ENCODE measurements at regions of chr5 and their contacts with region 1.

Region 1: GRCh38 chr5:115190388-115190787 is 20.7 kb upstream of the TRIM36 start:
- DNase-seq: no peak
- H3K4me3 ChIP-seq: no peak overlapping the region
- H3K27ac ChIP-seq: no peak overlapping the region
- H3K4me1 ChIP-seq: peaks cover 0 to 3% (median 0%) of the 10 kb centered on the region in 4 experiments; a peak in 2 of 7 replicates
- H3K27me3 ChIP-seq: no peaks in the 10 kb centered on the region
- CTCF ChIP-seq: no peak
- EP300 ChIP-seq: no peak
- POLR2A ChIP-seq: no peak
- RAD21 ChIP-seq: no peak

Region 2: DNA sequence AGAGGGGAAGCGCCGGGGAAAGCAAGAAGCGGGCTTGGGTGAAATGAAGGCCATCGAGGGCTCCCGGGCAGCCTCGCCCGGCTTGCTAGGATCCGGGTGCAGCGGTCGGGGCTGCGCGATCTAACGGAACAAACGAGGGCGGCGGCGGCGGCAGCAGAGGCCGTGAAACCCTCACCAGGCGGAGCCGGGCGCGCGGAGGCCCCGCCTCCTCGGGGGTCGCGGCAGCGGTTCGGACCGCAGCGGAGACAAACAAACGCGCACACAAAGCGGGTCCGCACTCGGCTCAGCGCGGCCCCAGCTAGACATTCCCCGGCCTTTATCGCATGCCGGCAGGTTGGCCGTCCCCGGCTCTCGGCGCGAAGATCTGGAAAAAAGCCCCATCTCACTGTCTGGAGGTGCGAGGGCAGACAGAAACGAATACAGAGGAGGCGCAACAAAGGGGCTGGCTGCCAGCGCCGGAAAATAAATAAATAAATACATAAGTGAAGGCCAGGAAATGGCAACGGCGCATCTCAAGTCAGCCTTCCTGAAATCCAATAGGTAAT is 10.2 kb before region 1 on chr5:
- CTCF ChIA-PET with region 1: interaction called, 11 read pairs
- POLR2A ChIA-PET with region 1: no interaction called
- DNase-seq: peak in 1 of 2 experiments; percentile 80
- H3K4me3 ChIP-seq: peak overlapping the region; percentile 38 to 67 (median 54)
- H3K27ac ChIP-seq: no peak overlapping the region
- H3K4me1 ChIP-seq: peaks cover 0 to 4% (median 2%) of the 10 kb centered on the region in 4 experiments; a peak in 5 of 7 replicates
- H3K27me3 ChIP-seq: peaks cover 25 to 55% (median 51%) of the 10 kb centered on the region in 4 experiments
- CTCF ChIP-seq: no peak
- EP300 ChIP-seq: no peak
- POLR2A ChIP-seq: no peak
- RAD21 ChIP-seq: no peak